ENCODE measurements at regions of chr1 and their contacts with region 1.

Region 1: DNA sequence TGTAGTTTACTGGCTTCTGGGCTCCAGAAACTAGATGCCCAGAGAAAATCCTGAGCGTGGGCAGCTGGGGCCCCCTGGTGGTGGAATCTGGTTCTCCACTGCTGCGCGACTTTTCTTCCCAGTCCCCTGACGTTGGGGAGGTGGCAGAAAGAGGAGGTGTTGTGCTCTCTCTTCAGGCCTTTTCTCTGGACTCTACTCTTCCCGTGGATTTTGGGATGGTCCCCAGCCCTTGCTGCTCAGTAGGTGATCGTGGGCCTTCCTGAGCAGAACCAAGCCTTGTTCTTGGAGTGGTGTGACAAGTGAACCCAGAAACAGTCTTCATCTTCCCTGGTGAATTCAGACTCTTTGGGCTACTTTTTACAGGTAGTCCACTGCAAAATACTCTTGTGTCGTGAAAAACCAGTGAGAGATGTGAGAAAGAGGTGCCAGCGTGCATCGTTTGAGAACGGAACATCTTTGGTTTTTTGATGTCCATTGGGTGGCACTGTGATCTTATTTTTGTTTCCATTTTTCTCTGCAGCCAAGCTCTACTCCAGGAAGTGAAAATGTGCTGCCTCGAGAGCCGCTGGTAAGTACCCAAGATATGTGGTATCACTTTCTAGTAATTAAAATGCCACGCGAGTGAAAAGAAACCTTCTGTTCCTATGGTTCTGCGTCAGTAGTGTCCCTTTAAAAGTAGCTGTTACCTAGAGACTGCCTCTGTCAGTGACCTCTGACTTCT is 20.2 kb downstream of the PEX14 start:
- DNase-seq: peak in 1 of 2 donors; percentile 84
- H3K4me3 ChIP-seq: peak overlapping the region; percentile 18 to 47
- H3K27ac ChIP-seq: no peak overlapping the region
- H3K4me1 ChIP-seq: peaks cover 3 to 7% of the 10 kb centered on the region in 2 donors
- H3K27me3 ChIP-seq: no peaks in the 10 kb centered on the region
- CTCF ChIP-seq: peak; percentile 85 to 93 (median 90)

Region 2: DNA sequence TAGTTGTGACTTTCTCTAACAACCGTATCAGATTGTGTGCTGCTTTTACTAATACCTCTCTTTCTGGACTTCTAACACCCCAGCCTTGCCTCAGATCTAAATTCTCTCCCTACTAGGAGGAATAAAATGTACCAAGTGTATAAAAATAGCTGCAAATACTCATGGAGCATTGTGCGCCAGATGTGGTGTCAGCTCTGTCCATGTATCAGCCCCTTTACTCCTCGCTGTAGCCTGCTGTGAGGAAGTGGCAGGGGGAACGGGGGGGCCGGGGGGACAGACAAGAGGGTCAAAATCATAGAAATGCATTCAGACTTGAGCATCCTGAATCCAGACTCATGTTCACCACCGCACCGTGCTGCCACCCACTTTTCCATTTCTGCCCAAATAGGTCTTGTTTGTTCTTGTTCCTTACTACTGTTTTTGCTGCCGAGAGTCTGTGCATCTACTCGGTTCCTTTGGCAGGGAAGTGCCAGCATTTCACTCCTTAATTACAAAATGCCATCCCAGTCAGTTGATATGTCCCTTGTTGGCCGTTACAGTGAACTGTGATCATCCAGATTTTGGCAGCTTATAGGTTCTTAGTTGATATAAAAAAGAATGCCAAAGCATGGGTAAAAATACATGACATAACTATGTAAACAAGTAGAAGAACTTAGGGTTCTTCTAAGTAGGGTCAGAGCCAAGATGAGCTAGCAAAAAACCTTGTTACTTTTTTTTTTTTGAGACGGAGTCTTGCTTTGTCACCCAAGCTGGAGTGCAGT is 385.8 kb before region 1 on chr1:
- intact Hi-C with region 1: no loop called
- DNase-seq: peak in 1 of 2 donors; percentile 82
- H3K4me3 ChIP-seq: peak overlapping the region in 1 of 2 donors; percentile 40
- H3K27ac ChIP-seq: peak overlapping the region; percentile 83 to 94
- H3K4me1 ChIP-seq: peaks cover 5 to 31% of the 10 kb centered on the region in 2 donors
- H3K27me3 ChIP-seq: no peaks in the 10 kb centered on the region
- CTCF ChIP-seq: no peak

Region 3: GRCh38 chr1:10378081-10378841 is 116.7 kb before region 1 on chr1:
- intact Hi-C with region 1: loop called (anchors 10 kb)
- DNase-seq: peak in 1 of 2 donors; percentile 69
- H3K4me3 ChIP-seq: no peak overlapping the region
- H3K27ac ChIP-seq: peak overlapping the region; percentile 73 to 82
- H3K4me1 ChIP-seq: peaks cover 0 to 12% of the 10 kb centered on the region in 2 donors
- H3K27me3 ChIP-seq: no peaks in the 10 kb centered on the region
- CTCF ChIP-seq: no peak

Region 4: DNA sequence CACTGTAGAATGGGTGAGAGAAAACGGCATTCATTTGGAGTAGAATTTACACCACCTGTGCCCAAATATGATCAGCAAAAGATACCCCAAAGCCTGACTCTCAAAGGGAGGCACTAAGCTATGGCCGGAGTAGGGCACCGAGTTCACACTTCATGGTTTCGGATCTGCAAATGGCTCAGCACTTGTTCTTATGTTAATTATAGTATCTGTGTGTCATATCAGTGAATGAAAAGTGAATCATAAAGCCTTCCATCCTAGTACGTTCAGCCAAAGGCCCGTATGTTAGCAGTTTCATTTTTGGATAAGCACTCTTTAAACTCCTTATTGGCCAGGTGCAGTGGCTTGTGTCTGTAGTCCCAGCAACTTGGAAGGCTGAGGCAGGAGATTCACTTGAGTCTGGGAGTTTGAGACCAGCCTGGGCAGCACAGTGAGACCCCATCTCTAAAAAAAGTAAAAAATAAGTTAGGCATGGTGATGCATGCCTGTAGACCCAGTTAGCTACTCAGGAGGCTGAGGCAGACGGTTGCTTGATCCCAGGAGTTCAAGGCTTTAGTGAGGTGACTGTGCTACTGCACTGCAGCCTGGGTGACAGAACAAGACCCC is 50.0 kb before region 1 on chr1:
- intact Hi-C with region 1: loop called (anchors 2 kb)
- DNase-seq: no peak
- H3K4me3 ChIP-seq: no peak overlapping the region
- H3K27ac ChIP-seq: no peak overlapping the region
- H3K4me1 ChIP-seq: no peaks in the 10 kb centered on the region
- H3K27me3 ChIP-seq: no peaks in the 10 kb centered on the region
- CTCF ChIP-seq: no peak

Region 5: DNA sequence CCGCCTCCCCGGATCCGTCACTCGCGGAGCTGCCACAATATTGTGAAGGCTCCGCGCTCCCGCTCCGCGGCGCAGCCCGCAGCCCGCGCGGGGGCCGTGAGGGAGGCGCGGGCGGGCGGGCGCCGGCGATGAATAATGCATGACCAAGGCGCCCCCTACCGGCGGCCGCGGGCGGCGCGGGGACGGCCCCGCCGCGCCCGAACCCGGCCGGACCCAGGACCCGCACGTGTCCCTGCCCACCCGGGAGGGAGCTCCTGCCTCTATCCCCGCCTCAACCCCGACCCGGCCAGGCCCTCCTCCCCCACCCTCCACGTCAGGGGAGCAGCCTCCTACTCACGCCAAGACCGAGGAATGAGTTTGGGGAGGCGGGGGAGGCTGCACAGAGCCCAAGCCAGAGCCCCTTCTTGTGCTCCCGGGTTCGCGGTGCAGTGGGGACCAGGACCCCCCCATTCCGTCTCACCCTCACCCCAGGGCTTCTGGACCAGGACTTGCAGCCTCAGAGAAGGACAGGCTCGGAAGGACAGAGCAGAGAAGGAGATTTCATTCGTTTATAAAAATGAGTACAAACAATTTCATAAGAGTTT is 372.3 kb after region 1 on chr1:
- intact Hi-C with region 1: loop called (anchors 1 kb)
- DNase-seq: peak in 1 of 2 donors; percentile 75
- H3K4me3 ChIP-seq: peak overlapping the region; percentile 54 to 72
- H3K27ac ChIP-seq: no peak overlapping the region
- H3K4me1 ChIP-seq: peaks cover 4% of the 10 kb centered on the region in 2 donors
- H3K27me3 ChIP-seq: peaks cover 4% of the 10 kb centered on the region
- CTCF ChIP-seq: peak; percentile 14 to 93 (median 46)

Region 6: DNA sequence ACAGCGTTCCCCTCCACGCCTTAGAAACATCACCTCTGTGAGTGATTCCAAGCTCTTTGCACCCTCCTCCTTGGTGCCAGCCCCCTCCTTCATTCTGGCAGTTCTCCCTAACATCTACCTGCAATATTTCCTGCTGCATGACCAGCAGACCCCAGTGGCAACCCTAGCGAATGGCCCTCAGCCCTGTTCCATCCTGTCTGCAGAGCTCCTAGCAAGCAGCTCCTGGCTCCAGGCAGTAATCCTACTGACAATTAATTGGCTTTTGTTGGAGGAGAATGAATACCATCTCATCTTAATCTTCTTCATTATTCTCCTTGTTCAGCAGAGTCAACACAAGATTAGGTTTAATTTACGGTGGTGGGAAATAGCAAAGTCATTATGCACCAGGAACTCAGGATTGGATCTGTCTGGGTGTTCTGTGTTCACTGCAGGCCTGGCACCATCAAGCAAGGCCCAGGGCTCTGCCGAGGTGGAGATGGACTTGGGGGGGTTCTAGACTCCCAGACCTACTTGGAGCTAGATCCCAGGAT is 1146.9 kb after region 1 on chr1:
- intact Hi-C with region 1: loop called (anchors 5 kb)
- DNase-seq: no peak
- H3K4me3 ChIP-seq: no peak overlapping the region
- H3K27ac ChIP-seq: no peak overlapping the region
- H3K4me1 ChIP-seq: no peaks in the 10 kb centered on the region
- H3K27me3 ChIP-seq: no peaks in the 10 kb centered on the region
- CTCF ChIP-seq: no peak